ENCODE measurements at regions of chr7 and their contacts with region 1.

Region 1: GRCh38 chr7:128135515-128136214 is 104.4 kb upstream of the LRRC4 start:
- DNase-seq: peak; percentile 44 to 83 (median 68)
- ATAC-seq: peak; percentile 96
- H3K4me3 ChIP-seq: peak overlapping the region; percentile 59
- H3K4me3 Mint-ChIP-seq: peak overlapping the region; percentile 67 to 88 (median 83)
- H3K27ac ChIP-seq: no peak overlapping the region
- H3K27ac Mint-ChIP-seq: peak overlapping the region in 5 of 9 donors; percentile 25 to 80 (median 48)
- H3K4me1 ChIP-seq: peaks cover 5 to 12% of the 10 kb centered on the region in 2 donors
- H3K4me1 Mint-ChIP-seq: peaks cover 9 to 26% (median 17%) of the 10 kb centered on the region in 7 donors
- H3K27me3 ChIP-seq: no peaks in the 10 kb centered on the region
- H3K27me3 Mint-ChIP-seq: peaks cover 14 to 60% (median 29%) of the 10 kb centered on the region in 5 donors

Region 2: DNA sequence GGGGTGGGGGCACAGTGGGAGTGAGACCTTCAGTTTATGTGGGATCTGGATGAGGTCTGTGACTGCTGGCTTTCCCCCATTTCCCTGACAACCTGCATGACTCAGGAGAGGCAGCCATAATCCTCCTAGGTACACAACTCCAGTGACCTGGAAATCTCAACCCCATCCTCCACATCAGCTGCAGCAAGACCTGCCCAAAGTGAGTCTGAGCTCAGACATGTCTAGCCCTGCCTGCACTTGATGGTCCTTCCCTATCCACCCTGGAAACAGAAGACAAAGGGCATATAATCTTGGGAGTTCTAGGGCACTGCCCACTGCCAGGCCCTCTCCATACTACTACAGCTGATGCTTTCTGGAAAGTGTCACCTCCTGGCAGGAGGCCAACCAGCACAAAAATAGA is 958.5 kb before region 1 on chr7:
- CTCF ChIA-PET with region 1: no interaction called
- POLR2A ChIA-PET with region 1: no interaction called
- intact Hi-C with region 1: no loop called
- DNase-seq: no peak
- ATAC-seq: no peak
- H3K4me3 ChIP-seq: no peak overlapping the region
- H3K4me3 Mint-ChIP-seq: no peak overlapping the region
- H3K27ac ChIP-seq: no peak overlapping the region
- H3K27ac Mint-ChIP-seq: no peak overlapping the region
- H3K4me1 ChIP-seq: no peaks in the 10 kb centered on the region
- H3K4me1 Mint-ChIP-seq: no peaks in the 10 kb centered on the region
- H3K27me3 ChIP-seq: no peaks in the 10 kb centered on the region
- H3K27me3 Mint-ChIP-seq: peaks cover 0 to 66% (median 55%) of the 10 kb centered on the region in 5 donors

Region 3: GRCh38 chr7:127708788-127709187 is 426.9 kb before region 1 on chr7:
- CTCF ChIA-PET with region 1: no interaction called
- POLR2A ChIA-PET with region 1: no interaction called
- intact Hi-C with region 1: loop called (anchors 1 to 2 kb)
- DNase-seq: peak; percentile 25 to 76 (median 65)
- ATAC-seq: peak; percentile 82
- H3K4me3 ChIP-seq: no peak overlapping the region
- H3K4me3 Mint-ChIP-seq: no peak overlapping the region
- H3K27ac ChIP-seq: no peak overlapping the region
- H3K27ac Mint-ChIP-seq: peak overlapping the region in 2 of 9 donors; percentile 18 to 26
- H3K4me1 ChIP-seq: no peaks in the 10 kb centered on the region
- H3K4me1 Mint-ChIP-seq: peaks cover 0 to 8% (median 0%) of the 10 kb centered on the region in 7 donors
- H3K27me3 ChIP-seq: no peaks in the 10 kb centered on the region
- H3K27me3 Mint-ChIP-seq: no peaks in the 10 kb centered on the region

Region 4: DNA sequence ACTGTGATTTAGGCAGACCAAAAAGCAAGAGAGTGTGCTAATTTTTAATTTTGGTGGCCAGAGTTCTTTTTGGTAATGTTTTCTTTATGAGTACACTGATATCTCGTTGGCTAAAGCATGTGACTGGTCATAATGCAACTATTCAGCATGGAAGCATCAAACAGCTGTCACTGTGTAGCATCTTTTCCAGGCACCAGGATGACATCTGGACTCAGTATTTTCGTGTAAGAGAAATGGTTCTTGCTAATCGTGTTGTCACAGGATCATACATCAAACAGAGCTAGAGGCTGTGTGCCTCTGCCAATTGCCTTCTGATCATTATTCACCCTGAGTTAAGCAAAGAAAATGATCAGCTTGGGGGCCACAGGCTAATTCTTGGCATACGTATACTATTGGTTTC is 364.8 kb before region 1 on chr7:
- CTCF ChIA-PET with region 1: no interaction called
- POLR2A ChIA-PET with region 1: no interaction called
- intact Hi-C with region 1: no loop called
- DNase-seq: no peak
- ATAC-seq: no peak
- H3K4me3 ChIP-seq: no peak overlapping the region
- H3K4me3 Mint-ChIP-seq: no peak overlapping the region
- H3K27ac ChIP-seq: no peak overlapping the region
- H3K27ac Mint-ChIP-seq: no peak overlapping the region
- H3K4me1 ChIP-seq: no peaks in the 10 kb centered on the region
- H3K4me1 Mint-ChIP-seq: peaks cover 8 to 35% (median 22%) of the 10 kb centered on the region in 7 donors
- H3K27me3 ChIP-seq: no peaks in the 10 kb centered on the region
- H3K27me3 Mint-ChIP-seq: no peaks in the 10 kb centered on the region

Region 5: GRCh38 chr7:128031901-128032604 is 103.6 kb before region 1 on chr7:
- CTCF ChIA-PET with region 1: no interaction called
- POLR2A ChIA-PET with region 1: no interaction called
- intact Hi-C with region 1: loop called in 1 of 2 experiments (anchors 2 kb)
- DNase-seq: peak; percentile 29 to 63 (median 53)
- ATAC-seq: peak; percentile 92
- H3K4me3 ChIP-seq: peak overlapping the region; percentile 61
- H3K4me3 Mint-ChIP-seq: peak overlapping the region; percentile 84 to 97 (median 92)
- H3K27ac ChIP-seq: no peak overlapping the region
- H3K27ac Mint-ChIP-seq: peak overlapping the region in 3 of 9 donors; percentile 74 to 76 (median 74)
- H3K4me1 ChIP-seq: no peaks in the 10 kb centered on the region
- H3K4me1 Mint-ChIP-seq: peaks cover 6 to 36% (median 23%) of the 10 kb centered on the region in 7 donors
- H3K27me3 ChIP-seq: no peaks in the 10 kb centered on the region
- H3K27me3 Mint-ChIP-seq: peaks cover 0 to 34% (median 7%) of the 10 kb centered on the region in 5 donors

Region 6: GRCh38 chr7:128076796-128077271 is 58.8 kb before region 1 on chr7:
- CTCF ChIA-PET with region 1: no interaction called
- POLR2A ChIA-PET with region 1: no interaction called
- intact Hi-C with region 1: no loop called
- DNase-seq: no peak
- ATAC-seq: no peak
- H3K4me3 ChIP-seq: no peak overlapping the region
- H3K4me3 Mint-ChIP-seq: no peak overlapping the region
- H3K27ac ChIP-seq: no peak overlapping the region
- H3K27ac Mint-ChIP-seq: no peak overlapping the region
- H3K4me1 ChIP-seq: no peaks in the 10 kb centered on the region
- H3K4me1 Mint-ChIP-seq: peaks cover 0 to 14% (median 6%) of the 10 kb centered on the region in 7 donors
- H3K27me3 ChIP-seq: no peaks in the 10 kb centered on the region
- H3K27me3 Mint-ChIP-seq: no peaks in the 10 kb centered on the region

Region 7: DNA sequence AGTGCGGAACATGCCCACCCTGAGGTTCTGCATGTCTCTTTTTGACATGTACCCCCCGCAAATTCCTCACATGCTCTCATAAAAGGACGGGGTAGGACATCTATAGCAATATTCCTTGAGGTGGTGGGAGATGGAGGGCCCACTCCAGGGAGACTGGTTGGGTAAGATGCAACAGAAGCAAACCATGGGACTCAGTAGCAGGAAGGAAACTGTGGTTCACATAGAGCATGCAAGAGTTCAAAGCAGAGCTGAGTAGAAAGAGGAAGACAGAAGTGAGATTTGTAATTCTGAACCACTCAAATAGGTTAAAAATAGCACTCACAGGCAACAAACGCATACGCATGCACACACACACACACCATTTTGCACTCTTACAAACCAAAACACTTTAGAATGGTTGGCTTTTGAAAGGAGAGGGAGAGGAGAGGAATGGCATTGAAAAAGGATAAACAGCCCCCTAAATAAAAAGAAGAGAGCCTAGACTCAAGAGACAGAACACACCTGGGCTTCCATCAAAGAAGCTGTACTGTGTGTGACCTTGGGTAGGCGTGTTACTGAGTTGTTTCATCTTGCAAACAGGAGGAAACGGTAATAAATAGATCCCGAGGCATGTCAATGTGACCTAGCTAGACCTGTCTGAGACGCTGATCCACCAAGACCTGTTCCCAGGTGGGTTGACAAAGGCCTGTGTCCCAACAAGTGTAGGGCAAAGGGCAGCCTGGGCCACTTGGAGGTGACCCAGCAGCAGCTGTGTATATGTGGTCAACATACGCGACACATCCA is 26.8 kb before region 1 on chr7:
- CTCF ChIA-PET with region 1: interaction called, 8 read pairs
- POLR2A ChIA-PET with region 1: interaction called, 9 read pairs
- intact Hi-C with region 1: loop called (anchors 1 to 2 kb)
- DNase-seq: peak in 7 of 9 donors; percentile 49 to 83 (median 77)
- ATAC-seq: peak; percentile 90
- H3K4me3 ChIP-seq: peak overlapping the region; percentile 41
- H3K4me3 Mint-ChIP-seq: peak overlapping the region; percentile 65 to 90 (median 79)
- H3K27ac ChIP-seq: peak overlapping the region; percentile 52
- H3K27ac Mint-ChIP-seq: peak overlapping the region; percentile 51 to 94 (median 86)
- H3K4me1 ChIP-seq: peaks cover 33 to 67% of the 10 kb centered on the region in 2 donors
- H3K4me1 Mint-ChIP-seq: peaks cover 54 to 86% (median 82%) of the 10 kb centered on the region in 7 donors
- H3K27me3 ChIP-seq: no peaks in the 10 kb centered on the region
- H3K27me3 Mint-ChIP-seq: peaks cover 0 to 24% (median 0%) of the 10 kb centered on the region in 5 donors

Region 8: GRCh38 chr7:128322040-128322643 is 186.5 kb after region 1 on chr7:
- CTCF ChIA-PET with region 1: no interaction called
- POLR2A ChIA-PET with region 1: no interaction called
- intact Hi-C with region 1: loop called in 1 of 2 experiments (anchors 1 kb)
- DNase-seq: peak in 5 of 9 donors; percentile 13 to 31 (median 22)
- ATAC-seq: peak; percentile 80
- H3K4me3 ChIP-seq: no peak overlapping the region
- H3K4me3 Mint-ChIP-seq: peak overlapping the region in 4 of 10 donors; percentile 2 to 33 (median 21)
- H3K27ac ChIP-seq: no peak overlapping the region
- H3K27ac Mint-ChIP-seq: peak overlapping the region in 6 of 9 donors; percentile 7 to 56 (median 13)
- H3K4me1 ChIP-seq: peaks cover 5 to 33% of the 10 kb centered on the region in 2 donors
- H3K4me1 Mint-ChIP-seq: peaks cover 17 to 38% (median 27%) of the 10 kb centered on the region in 7 donors
- H3K27me3 ChIP-seq: no peaks in the 10 kb centered on the region
- H3K27me3 Mint-ChIP-seq: no peaks in the 10 kb centered on the region

Measured in naive thymus-derived CD4-positive, alpha-beta T cell (primary cell).